MCF 10A (cell line): ENCODE measurements at regions of chr3 and their contacts with region 1.

Region 1: DNA sequence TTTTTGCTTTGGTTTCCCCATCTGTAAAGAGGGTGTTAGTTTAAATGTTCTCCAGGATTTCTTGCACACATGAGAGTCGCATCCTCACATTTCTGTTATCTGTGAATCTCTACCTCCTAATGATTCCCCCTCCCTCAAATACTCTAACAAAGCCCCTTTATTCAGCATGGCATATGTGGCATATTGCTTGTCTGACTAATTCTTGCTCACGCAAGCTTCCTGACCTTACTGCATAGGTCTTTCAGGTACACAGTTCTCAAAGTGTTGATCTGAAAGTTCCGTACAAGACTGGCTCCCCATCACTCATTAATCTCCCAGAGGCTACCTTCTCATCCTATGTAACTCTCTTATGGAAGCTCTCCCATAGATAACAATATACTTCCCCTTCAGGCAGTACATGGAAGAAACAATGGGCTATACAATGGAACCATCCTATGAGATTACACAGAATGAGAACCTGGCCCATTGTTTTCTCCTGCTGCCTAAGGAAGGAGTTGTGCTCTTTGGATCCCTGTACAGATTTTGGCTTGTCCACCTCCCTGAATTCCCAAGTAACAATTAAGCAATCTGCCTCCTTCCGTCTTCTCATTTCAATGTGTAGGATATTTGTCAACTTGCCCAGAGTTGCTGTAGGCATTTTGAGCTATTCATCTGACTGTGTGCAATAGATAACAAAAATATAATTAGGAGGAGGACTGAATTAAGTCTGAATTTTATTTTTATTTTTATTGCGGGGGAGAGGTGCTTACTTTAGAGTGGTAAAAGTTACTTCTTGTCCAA is 51.0 kb downstream of the PPARG start:
- DNase-seq: peak; percentile 79
- H3K4me3 Mint-ChIP-seq: no peak overlapping the region
- H3K27ac Mint-ChIP-seq: no peak overlapping the region
- H3K4me1 Mint-ChIP-seq: peaks cover 16% of the 10 kb centered on the region
- H3K27me3 Mint-ChIP-seq: no peaks in the 10 kb centered on the region
- CTCF ChIP-seq: no peak

Region 2: DNA sequence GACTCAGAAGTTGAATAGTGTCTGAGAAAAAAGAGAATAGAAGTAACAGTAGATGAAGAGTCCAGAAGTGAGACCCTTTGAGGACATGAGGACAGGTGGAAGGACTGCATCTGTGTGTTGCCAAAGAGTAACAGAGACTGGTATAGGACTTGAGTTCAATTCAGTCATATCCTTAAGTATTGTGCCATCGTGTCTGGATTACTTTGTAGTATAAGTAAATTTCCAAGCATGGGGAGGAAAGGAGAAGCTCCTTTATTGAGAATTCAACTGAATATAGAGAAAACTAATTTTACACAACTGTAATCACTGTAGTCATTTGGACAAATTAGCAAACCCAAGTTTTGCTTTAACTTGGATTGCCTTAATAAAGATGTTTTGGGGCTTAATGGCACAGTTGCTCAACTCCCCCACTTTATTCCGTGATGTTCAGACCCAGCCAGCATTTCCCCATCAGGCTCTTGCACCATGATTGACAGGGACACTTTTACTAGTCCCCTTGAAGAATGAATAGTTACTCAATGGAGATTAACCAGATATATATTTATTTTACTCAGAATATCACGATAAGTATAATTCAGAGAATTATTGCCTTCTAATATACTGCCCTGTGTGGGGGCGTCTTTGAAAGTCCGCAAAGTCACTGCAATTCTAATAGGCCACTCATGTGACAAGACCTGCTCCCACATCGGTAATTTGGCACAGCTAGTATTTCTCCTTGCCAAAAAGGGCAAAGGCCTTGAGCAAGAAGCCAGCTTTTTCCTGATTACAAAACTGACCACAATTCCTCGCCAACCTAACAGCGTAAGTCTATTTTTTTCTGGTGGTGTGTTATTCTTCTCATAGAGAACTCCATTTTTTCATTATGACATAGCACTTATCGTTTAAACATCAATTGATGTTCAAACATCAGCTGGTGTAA is 10.3 kb after region 1 on chr3:
- CTCF ChIA-PET with region 1: no interaction called
- POLR2A ChIA-PET with region 1: interaction called, 13 read pairs
- intact Hi-C with region 1: no loop called
- DNase-seq: peak; percentile 95
- H3K4me3 Mint-ChIP-seq: peak overlapping the region; percentile 28
- H3K27ac Mint-ChIP-seq: no peak overlapping the region
- H3K4me1 Mint-ChIP-seq: peaks cover 55% of the 10 kb centered on the region
- H3K27me3 Mint-ChIP-seq: no peaks in the 10 kb centered on the region
- CTCF ChIP-seq: no peak

Region 3: DNA sequence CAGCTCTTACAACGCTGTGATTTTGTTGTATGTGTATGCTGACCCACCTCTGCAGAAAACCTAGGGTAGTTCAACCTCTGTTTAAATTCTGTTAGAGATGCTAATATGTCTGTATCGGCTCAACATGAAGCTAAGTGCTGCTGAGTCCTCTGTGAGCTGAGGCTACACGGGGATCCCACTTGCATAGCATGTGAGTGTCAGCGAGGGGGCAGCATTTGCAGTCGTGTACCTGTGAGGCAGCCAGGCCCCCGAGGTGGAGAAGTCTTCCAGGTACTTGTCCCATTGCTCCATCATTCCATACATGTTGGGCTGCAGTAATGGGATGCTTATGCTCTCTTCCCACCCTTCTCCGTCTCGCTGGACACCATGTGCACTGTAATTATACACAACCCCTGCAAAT is 201.7 kb after region 1 on chr3:
- CTCF ChIA-PET with region 1: no interaction called
- POLR2A ChIA-PET with region 1: no interaction called
- intact Hi-C with region 1: no loop called
- DNase-seq: no peak
- H3K4me3 Mint-ChIP-seq: no peak overlapping the region
- H3K27ac Mint-ChIP-seq: no peak overlapping the region
- H3K4me1 Mint-ChIP-seq: peaks cover 7% of the 10 kb centered on the region
- H3K27me3 Mint-ChIP-seq: no peaks in the 10 kb centered on the region
- CTCF ChIP-seq: no peak